ENCODE measurements at regions of chr11 and their contacts with region 1.

Region 1: DNA sequence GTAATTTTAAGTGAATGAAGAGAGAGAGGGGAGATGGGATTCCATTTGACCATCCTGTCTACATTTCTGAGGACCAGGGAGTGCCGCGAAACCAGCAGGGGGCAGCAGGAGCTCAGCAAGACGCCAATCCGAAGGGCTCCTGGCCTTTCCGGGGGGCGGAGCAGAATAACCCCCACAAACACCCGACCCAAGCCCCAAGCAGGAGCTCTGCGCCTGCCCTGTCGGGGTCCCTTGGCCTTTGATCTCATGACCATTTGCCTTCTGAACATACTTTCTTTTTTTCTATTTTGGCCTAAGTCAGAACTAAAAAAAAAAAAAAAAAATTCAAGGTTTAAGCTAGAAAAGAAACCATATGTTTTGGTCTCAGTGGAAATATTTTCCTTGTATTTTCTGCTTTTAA is 21.9 kb upstream of the SCN2B start:
- DNase-seq: peak; percentile 48
- ATAC-seq: peak; percentile 97
- H3K4me3 ChIP-seq: no peak overlapping the region
- H3K27ac ChIP-seq: no peak overlapping the region
- H3K4me1 ChIP-seq: peaks cover 0 to 17% of the 10 kb centered on the region in 2 experiments; a peak in 3 of 4 replicates
- H3K27me3 ChIP-seq: no peaks in the 10 kb centered on the region
- CTCF ChIP-seq: peak; percentile 88 to 94 (median 92)
- POLR2A ChIP-seq: no peak
- RAD21 ChIP-seq: peak; percentile 99

Region 2: DNA sequence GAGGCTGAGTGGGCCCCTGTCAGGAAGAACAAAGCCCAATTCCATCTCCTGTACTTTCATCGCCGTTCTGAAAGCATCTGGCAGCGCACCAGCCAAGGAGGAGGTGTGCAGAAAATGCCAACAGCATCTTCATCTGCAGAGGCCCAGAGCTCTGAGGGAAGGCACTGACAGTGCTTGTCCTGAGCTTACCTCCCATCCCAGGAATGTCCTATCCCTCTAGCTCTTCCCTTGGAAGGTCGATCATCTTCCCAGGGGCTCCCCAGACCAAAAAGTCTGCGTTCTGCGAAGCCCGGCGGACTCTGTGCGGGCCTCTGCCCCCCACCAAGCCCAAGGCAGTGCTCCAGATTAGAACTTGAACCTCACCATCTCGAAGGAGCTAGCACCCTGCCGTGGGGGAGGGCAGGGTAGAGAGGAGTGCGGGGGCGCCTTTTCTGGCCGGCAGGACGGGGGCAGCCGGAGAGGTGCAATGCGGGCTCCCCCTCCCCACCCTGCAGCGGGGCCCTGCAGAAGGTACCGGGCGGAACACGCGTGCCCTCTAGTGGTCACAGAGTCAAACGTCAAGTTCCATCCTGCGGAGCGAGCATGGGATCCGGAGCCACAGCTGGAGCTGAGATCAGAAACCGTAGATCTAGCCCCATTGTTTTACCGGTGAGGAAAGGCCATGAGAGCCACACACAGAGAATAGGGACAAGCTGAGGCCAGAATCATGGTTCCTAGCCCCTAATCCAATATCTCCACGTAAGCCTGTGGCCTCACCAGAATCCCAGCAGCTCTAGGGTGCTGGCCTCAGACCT is 26.9 kb before region 1 on chr11:
- CTCF ChIA-PET with region 1: interaction called, 13 read pairs
- POLR2A ChIA-PET with region 1: no interaction called
- RAD21 ChIA-PET with region 1: interaction called in 1 of 2 experiments, 3 read pairs
- intact Hi-C with region 1: no loop called
- DNase-seq: no peak
- ATAC-seq: peak; percentile 93
- H3K4me3 ChIP-seq: no peak overlapping the region
- H3K27ac ChIP-seq: no peak overlapping the region
- H3K4me1 ChIP-seq: peaks cover 0 to 7% of the 10 kb centered on the region in 2 experiments; a peak in 1 of 4 replicates
- H3K27me3 ChIP-seq: no peaks in the 10 kb centered on the region
- CTCF ChIP-seq: peak; percentile 81 to 93 (median 82)
- POLR2A ChIP-seq: no peak
- RAD21 ChIP-seq: peak; percentile 95

Region 3: DNA sequence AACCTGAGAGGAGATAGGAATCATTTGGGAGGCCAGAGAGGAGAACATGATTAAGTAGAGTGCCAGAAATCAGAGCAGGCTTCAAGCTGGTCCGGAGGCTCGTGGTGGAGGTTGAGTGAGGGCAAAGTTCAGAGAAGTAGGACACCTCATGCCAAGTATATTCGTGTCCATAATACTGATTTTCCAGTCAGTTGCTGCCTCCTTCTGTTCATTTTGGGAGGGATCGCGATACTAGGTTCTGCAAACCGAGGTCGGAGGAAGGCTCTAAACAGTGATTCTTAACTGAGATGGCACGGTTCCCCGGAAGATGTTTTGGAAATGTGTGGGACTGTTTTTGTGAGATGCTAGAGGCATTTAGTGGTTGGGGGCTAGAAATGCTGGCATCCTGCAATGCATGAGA is 92.6 kb after region 1 on chr11:
- CTCF ChIA-PET with region 1: interaction called, 61 read pairs
- POLR2A ChIA-PET with region 1: no interaction called
- RAD21 ChIA-PET with region 1: interaction called, 10 read pairs
- intact Hi-C with region 1: loop called (anchors 1 kb)
- DNase-seq: peak; percentile 51
- ATAC-seq: peak; percentile 88
- H3K4me3 ChIP-seq: peak overlapping the region; percentile 10 to 22; a peak in 3 of 4 replicates
- H3K27ac ChIP-seq: no peak overlapping the region
- H3K4me1 ChIP-seq: peaks cover 10 to 27% of the 10 kb centered on the region in 2 experiments; a peak in 3 of 4 replicates
- H3K27me3 ChIP-seq: no peaks in the 10 kb centered on the region
- CTCF ChIP-seq: peak; percentile 48 to 95 (median 59)
- POLR2A ChIP-seq: no peak
- RAD21 ChIP-seq: peak; percentile 99

Region 4: GRCh38 chr11:118353084-118353710 is 154.8 kb after region 1 on chr11:
- CTCF ChIA-PET with region 1: interaction called, 9 read pairs
- POLR2A ChIA-PET with region 1: no interaction called
- RAD21 ChIA-PET with region 1: no interaction called
- intact Hi-C with region 1: loop called (anchors 1 kb)
- DNase-seq: no peak
- ATAC-seq: no peak; the same call in 1 of the 2 replicates
- H3K4me3 ChIP-seq: no peak overlapping the region
- H3K27ac ChIP-seq: no peak overlapping the region
- H3K4me1 ChIP-seq: no peaks in the 10 kb centered on the region
- H3K27me3 ChIP-seq: peaks cover 22% of the 10 kb centered on the region
- CTCF ChIP-seq: peak; percentile 45 to 76 (median 70); a peak in 5 of 6 replicates
- POLR2A ChIP-seq: no peak
- RAD21 ChIP-seq: peak; percentile 62

Region 5: GRCh38 chr11:118488480-118489109 is 290.2 kb after region 1 on chr11:
- CTCF ChIA-PET with region 1: interaction called, 4 read pairs
- POLR2A ChIA-PET with region 1: no interaction called
- RAD21 ChIA-PET with region 1: no interaction called
- intact Hi-C with region 1: loop called (anchors 1 kb)
- DNase-seq: peak; percentile 59
- ATAC-seq: peak; percentile 81
- H3K4me3 ChIP-seq: no peak overlapping the region
- H3K27ac ChIP-seq: no peak overlapping the region
- H3K4me1 ChIP-seq: no peaks in the 10 kb centered on the region
- H3K27me3 ChIP-seq: no peaks in the 10 kb centered on the region
- CTCF ChIP-seq: peak; percentile 79 to 91 (median 83)
- POLR2A ChIP-seq: no peak
- RAD21 ChIP-seq: peak; percentile 91